ENCODE measurements at regions of chr4 and their contacts with region 1.

Region 1: GRCh38 chr4:173168396-173169177 is at the start of gene GALNT7:
- DNase-seq: peak; percentile 61
- H3K4me3 ChIP-seq: peak within 1 kb of the TSS; percentile 81 to 94 (median 83)
- H3K27ac ChIP-seq: peak within 1 kb of the TSS; percentile 62
- H3K4me1 ChIP-seq: peaks cover 23% of the 10 kb centered on the region
- H3K27me3 ChIP-seq: no peaks in the 10 kb centered on the region
- CTCF ChIP-seq: no peak
- POLR2A ChIP-seq: no peak
- total RNA-seq, gene GALNT7: 54.6 and 63.3 TPM in 2 replicates

Region 2: GRCh38 chr4:173057901-173058300 is 110.7 kb before region 1 on chr4:
- CTCF ChIA-PET with region 1: no interaction called
- POLR2A ChIA-PET with region 1: no interaction called
- dilution Hi-C with region 1: no loop called
- intact Hi-C with region 1: loop called (anchors 2 kb)
- DNase-seq: peak; percentile 74
- H3K4me3 ChIP-seq: no peak overlapping the region
- H3K27ac ChIP-seq: peak overlapping the region; percentile 74
- H3K4me1 ChIP-seq: peaks cover 28% of the 10 kb centered on the region
- H3K27me3 ChIP-seq: no peaks in the 10 kb centered on the region
- CTCF ChIP-seq: no peak
- POLR2A ChIP-seq: no peak

Region 3: GRCh38 chr4:173138624-173139023 is 30.0 kb before region 1 on chr4:
- CTCF ChIA-PET with region 1: no interaction called
- POLR2A ChIA-PET with region 1: no interaction called
- dilution Hi-C with region 1: no loop called
- intact Hi-C with region 1: no loop called
- DNase-seq: no peak
- H3K4me3 ChIP-seq: no peak overlapping the region
- H3K27ac ChIP-seq: no peak overlapping the region
- H3K4me1 ChIP-seq: no peaks in the 10 kb centered on the region
- H3K27me3 ChIP-seq: no peaks in the 10 kb centered on the region
- CTCF ChIP-seq: no peak
- POLR2A ChIP-seq: no peak

Region 4: DNA sequence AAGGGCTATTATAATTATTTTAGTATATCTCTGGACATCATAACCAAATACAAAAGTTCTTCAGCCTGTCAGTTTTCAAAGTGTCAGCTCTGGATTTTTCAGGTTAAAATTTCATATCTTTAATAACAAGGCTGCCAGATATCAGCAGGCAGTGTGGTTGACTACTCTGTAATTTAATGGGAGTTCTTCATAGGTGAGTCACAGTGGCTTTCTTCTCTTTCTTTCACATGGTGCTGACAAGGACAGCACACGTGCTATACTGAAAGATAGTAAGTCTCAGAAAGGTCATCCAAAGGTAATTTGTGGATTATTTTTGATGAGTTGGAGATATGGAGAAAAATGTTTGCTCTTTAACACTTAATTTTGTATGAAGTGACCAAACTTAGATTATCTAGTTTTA is 43.3 kb after region 1 on chr4:
- CTCF ChIA-PET with region 1: interaction called, 6 read pairs
- POLR2A ChIA-PET with region 1: no interaction called
- dilution Hi-C with region 1: no loop called
- intact Hi-C with region 1: loop called (anchors 1 kb)
- DNase-seq: peak; percentile 53
- H3K4me3 ChIP-seq: no peak overlapping the region
- H3K27ac ChIP-seq: no peak overlapping the region
- H3K4me1 ChIP-seq: peaks cover 24% of the 10 kb centered on the region
- H3K27me3 ChIP-seq: no peaks in the 10 kb centered on the region
- CTCF ChIP-seq: no peak
- POLR2A ChIP-seq: no peak

Region 5: GRCh38 chr4:173231916-173232315 is 63.3 kb after region 1 on chr4:
- CTCF ChIA-PET with region 1: interaction called, 7 read pairs
- POLR2A ChIA-PET with region 1: no interaction called
- dilution Hi-C with region 1: no loop called
- intact Hi-C with region 1: loop called (anchors 1 kb)
- DNase-seq: peak; percentile 79
- H3K4me3 ChIP-seq: no peak overlapping the region
- H3K27ac ChIP-seq: peak overlapping the region; percentile 6
- H3K4me1 ChIP-seq: peaks cover 9% of the 10 kb centered on the region
- H3K27me3 ChIP-seq: no peaks in the 10 kb centered on the region
- CTCF ChIP-seq: peak; percentile 10 to 39
- POLR2A ChIP-seq: no peak

Region 6: GRCh38 chr4:173370477-173371291 is 202.1 kb after region 1 on chr4 and contains the start of gene SAP30:
- CTCF ChIA-PET with region 1: no interaction called
- POLR2A ChIA-PET with region 1: no interaction called
- dilution Hi-C with region 1: no loop called
- intact Hi-C with region 1: loop called (anchors 2 kb)
- DNase-seq: peak; percentile 99
- H3K4me3 ChIP-seq: peak within 1 kb of the TSS; percentile 87 to 99 (median 91)
- H3K27ac ChIP-seq: peak within 1 kb of the TSS; percentile 93
- H3K4me1 ChIP-seq: peaks cover 24% of the 10 kb centered on the region
- H3K27me3 ChIP-seq: no peaks in the 10 kb centered on the region
- CTCF ChIP-seq: no peak
- POLR2A ChIP-seq: peak; percentile 95
- total RNA-seq, gene SAP30: 23.8 and 27.1 TPM in 2 replicates

Region 7: GRCh38 chr4:173457893-173458292 is 289.3 kb after region 1 on chr4:
- CTCF ChIA-PET with region 1: no interaction called
- POLR2A ChIA-PET with region 1: no interaction called
- dilution Hi-C with region 1: no loop called
- intact Hi-C with region 1: no loop called
- DNase-seq: no peak
- H3K4me3 ChIP-seq: no peak overlapping the region
- H3K27ac ChIP-seq: no peak overlapping the region
- H3K4me1 ChIP-seq: no peaks in the 10 kb centered on the region
- H3K27me3 ChIP-seq: no peaks in the 10 kb centered on the region
- CTCF ChIP-seq: no peak
- POLR2A ChIP-seq: no peak